Calu3 (cell line): ENCODE measurements at regions of chr3 and their contacts with region 1.

Region 1: DNA sequence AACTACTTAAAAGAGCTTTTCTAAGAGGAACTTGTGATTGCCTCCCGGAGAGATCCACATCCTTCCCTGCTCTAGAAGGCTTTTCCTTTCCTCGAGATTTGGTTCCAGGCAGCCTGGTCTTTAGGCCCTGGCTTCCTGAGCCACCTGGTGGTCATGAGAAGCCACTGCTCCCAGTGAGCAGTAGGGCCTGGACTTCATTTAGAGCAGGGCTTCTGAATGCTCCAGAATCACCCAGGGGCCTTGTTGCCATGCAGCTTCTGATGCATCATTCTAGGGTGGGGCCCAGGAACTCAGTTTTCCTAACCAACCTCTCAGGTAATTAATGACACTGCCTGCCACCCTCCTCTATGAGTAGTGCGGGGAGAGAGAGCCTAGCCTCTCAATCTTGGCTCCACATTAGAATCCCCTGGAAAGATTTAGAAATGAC is 29.6 kb downstream of the PSMD6 start:
- DNase-seq: peak; percentile 56
- H3K4me3 Mint-ChIP-seq: no peak overlapping the region
- H3K27ac Mint-ChIP-seq: no peak overlapping the region
- H3K4me1 Mint-ChIP-seq: no peaks in the 10 kb centered on the region
- H3K27me3 Mint-ChIP-seq: no peaks in the 10 kb centered on the region
- CTCF ChIP-seq: peak; percentile 64

Region 2: GRCh38 chr3:63631670-63632069 is 362.0 kb before region 1 on chr3:
- CTCF ChIA-PET with region 1: no interaction called
- intact Hi-C with region 1: no loop called
- DNase-seq: no peak
- H3K4me3 Mint-ChIP-seq: no peak overlapping the region
- H3K27ac Mint-ChIP-seq: no peak overlapping the region
- H3K4me1 Mint-ChIP-seq: no peaks in the 10 kb centered on the region
- H3K27me3 Mint-ChIP-seq: peaks cover 17% of the 10 kb centered on the region
- CTCF ChIP-seq: no peak

Region 3: GRCh38 chr3:63951492-63952247 is 42.0 kb before region 1 on chr3:
- CTCF ChIA-PET with region 1: no interaction called
- intact Hi-C with region 1: loop called (anchors 5 kb)
- DNase-seq: no peak
- H3K4me3 Mint-ChIP-seq: no peak overlapping the region
- H3K27ac Mint-ChIP-seq: no peak overlapping the region
- H3K4me1 Mint-ChIP-seq: peaks cover 24% of the 10 kb centered on the region
- H3K27me3 Mint-ChIP-seq: no peaks in the 10 kb centered on the region
- CTCF ChIP-seq: no peak

Region 4: DNA sequence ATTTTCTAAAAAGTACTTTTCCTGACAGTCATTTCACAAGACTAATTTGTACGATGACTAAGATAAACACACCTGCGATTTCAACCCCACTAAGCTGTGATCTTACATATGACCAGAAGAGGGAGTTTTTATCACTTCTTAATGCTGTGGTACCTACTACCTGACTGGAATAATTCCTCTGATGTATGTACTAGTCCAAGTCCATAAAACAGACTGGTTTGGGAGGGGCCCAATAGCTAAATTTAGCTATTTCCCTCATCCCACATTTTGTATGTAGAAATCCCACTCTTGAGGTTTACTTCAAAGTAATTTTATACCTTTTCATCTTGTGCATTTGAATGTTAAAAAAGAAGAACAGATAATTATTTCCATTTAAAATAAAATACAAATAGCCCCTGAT is 31.8 kb before region 1 on chr3:
- CTCF ChIA-PET with region 1: interaction called, 10 read pairs
- intact Hi-C with region 1: loop called (anchors 2 kb)
- DNase-seq: no peak
- H3K4me3 Mint-ChIP-seq: no peak overlapping the region
- H3K27ac Mint-ChIP-seq: no peak overlapping the region
- H3K4me1 Mint-ChIP-seq: peaks cover 13% of the 10 kb centered on the region
- H3K27me3 Mint-ChIP-seq: no peaks in the 10 kb centered on the region
- CTCF ChIP-seq: no peak